ENCODE measurements at regions of chr5 and their contacts with region 1.

Region 1: GRCh38 chr5:172833686-172834414 is at the start of gene ERGIC1:
- DNase-seq: peak; percentile 87
- H3K4me3 ChIP-seq: peak within 1 kb of the TSS; percentile 88
- H3K27ac ChIP-seq: peak within 1 kb of the TSS; percentile 94
- H3K4me1 ChIP-seq: peaks cover 44% of the 10 kb centered on the region
- CTCF ChIP-seq: no peak
- total RNA-seq, gene ERGIC1: 101 and 125 TPM in 2 replicates

Region 2: GRCh38 chr5:172106511-172107356 is 727.1 kb before region 1 on chr5:
- CTCF ChIA-PET with region 1: no interaction called
- POLR2A ChIA-PET with region 1: no interaction called
- intact Hi-C with region 1: loop called (anchors 10 kb)
- DNase-seq: peak; percentile 57
- H3K4me3 ChIP-seq: peak overlapping the region; percentile 35
- H3K27ac ChIP-seq: no peak overlapping the region
- H3K4me1 ChIP-seq: peaks cover 31% of the 10 kb centered on the region
- CTCF ChIP-seq: peak; percentile 96

Region 3: GRCh38 chr5:172770675-172771438 is 63.0 kb before region 1 on chr5 and contains the start of gene DUSP1:
- CTCF ChIA-PET with region 1: no interaction called
- POLR2A ChIA-PET with region 1: interaction called, 6 read pairs
- intact Hi-C with region 1: loop called (anchors 1 kb)
- DNase-seq: peak; percentile 93
- H3K4me3 ChIP-seq: peak within 1 kb of the TSS; percentile 82
- H3K27ac ChIP-seq: peak within 1 kb of the TSS; percentile 44
- H3K4me1 ChIP-seq: peaks cover 29% of the 10 kb centered on the region
- CTCF ChIP-seq: peak; percentile 59
- total RNA-seq, gene DUSP1: 5.3 and 7.0 TPM in 2 replicates

Region 4: DNA sequence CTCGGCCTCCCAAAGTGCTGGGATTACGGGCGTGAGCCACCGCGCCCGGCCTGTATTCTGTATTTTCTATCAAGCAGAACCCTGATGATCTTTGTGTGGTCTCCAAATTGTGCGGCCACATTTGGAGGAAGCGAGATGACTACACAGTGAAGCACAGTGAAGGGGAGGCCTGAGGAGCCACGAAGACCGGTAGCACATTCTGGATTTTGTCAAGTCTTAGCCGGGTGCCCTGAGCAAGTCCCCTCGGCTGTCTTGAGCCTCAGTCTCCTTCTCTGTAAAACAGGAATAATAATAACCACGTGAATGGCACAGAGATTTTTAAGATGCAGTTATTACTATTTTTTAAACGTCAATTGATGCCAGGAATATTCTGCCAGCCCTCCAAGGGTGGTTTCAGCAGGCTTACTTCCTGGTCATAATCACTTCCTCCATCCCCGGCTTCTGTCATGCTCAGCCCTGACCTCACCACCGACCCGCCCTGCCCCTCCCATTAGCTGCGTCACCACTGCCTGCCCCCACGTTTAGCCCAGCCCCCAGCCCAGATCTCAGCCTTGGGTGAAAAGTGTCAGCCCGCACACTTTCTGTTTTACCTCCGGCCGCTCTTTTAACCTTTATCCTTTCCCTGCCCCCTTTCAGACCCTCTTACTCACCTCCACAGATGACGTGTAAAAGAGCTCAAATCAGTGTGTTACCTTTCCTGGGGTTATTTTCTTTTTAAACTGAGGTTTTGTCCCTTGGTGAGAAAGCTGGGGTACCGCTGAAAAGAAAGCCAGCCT is 26.8 kb before region 1 on chr5:
- CTCF ChIA-PET with region 1: no interaction called
- POLR2A ChIA-PET with region 1: no interaction called
- intact Hi-C with region 1: no loop called
- DNase-seq: peak; percentile 68
- H3K4me3 ChIP-seq: peak overlapping the region; percentile 11
- H3K27ac ChIP-seq: no peak overlapping the region
- H3K4me1 ChIP-seq: peaks cover 10% of the 10 kb centered on the region
- CTCF ChIP-seq: no peak

Region 5: GRCh38 chr5:172849606-172850453 is 16.0 kb after region 1 on chr5:
- CTCF ChIA-PET with region 1: no interaction called
- POLR2A ChIA-PET with region 1: interaction called, 11 read pairs
- intact Hi-C with region 1: loop called (anchors 1 kb)
- DNase-seq: peak; percentile 46
- H3K4me3 ChIP-seq: no peak overlapping the region
- H3K27ac ChIP-seq: peak overlapping the region; percentile 38
- H3K4me1 ChIP-seq: peaks cover 34% of the 10 kb centered on the region
- CTCF ChIP-seq: no peak

Region 6: GRCh38 chr5:172910828-172911627 is 77.2 kb after region 1 on chr5:
- CTCF ChIA-PET with region 1: no interaction called
- POLR2A ChIA-PET with region 1: interaction called, 3 read pairs
- intact Hi-C with region 1: loop called (anchors 2 kb)
- DNase-seq: peak; percentile 35
- H3K4me3 ChIP-seq: no peak overlapping the region
- H3K27ac ChIP-seq: no peak overlapping the region
- H3K4me1 ChIP-seq: peaks cover 9% of the 10 kb centered on the region
- CTCF ChIP-seq: peak; percentile 42

Region 7: GRCh38 chr5:172932313-172933017 is 98.6 kb after region 1 on chr5:
- CTCF ChIA-PET with region 1: no interaction called
- POLR2A ChIA-PET with region 1: no interaction called
- intact Hi-C with region 1: loop called (anchors 2 kb)
- DNase-seq: peak; percentile 64
- H3K4me3 ChIP-seq: no peak overlapping the region
- H3K27ac ChIP-seq: no peak overlapping the region
- H3K4me1 ChIP-seq: no peaks in the 10 kb centered on the region
- CTCF ChIP-seq: peak; percentile 91

Region 8: DNA sequence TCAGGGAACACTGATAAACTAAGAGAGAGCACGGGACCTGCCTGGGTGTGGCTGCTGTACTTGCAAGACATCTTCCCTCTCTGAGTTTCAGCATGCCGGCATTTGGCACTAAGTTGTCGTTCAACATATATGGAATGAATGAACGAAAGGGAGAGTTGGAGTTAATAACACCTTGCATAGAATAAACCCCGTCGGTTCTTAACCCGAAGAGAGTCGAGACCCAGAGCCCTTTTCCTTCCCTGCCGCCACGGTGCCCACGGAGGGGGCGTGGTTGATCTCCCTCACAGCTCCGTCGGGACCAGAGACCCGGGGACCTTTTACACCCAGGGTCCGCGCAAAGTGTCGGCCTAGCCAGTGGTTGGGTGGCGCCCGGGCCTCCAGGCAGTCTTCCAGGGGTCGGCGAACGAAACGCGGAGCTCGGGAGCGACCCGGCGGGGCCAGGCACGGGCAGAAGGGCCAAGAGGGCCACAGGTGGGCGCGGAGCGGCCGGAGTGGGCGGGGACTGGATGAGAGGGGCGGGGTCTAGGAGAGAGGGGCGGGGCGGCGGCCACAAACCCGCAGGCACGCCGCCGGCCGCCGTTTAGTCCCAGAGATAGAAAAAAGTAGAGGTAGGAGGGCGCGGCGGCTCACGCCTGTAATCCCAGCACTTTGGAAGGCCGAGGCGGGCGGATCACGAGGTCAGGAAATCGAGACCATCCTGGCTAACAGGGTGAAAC is 124.6 kb after region 1 on chr5:
- CTCF ChIA-PET with region 1: no interaction called
- POLR2A ChIA-PET with region 1: no interaction called
- intact Hi-C with region 1: no loop called
- DNase-seq: peak; percentile 67
- H3K4me3 ChIP-seq: peak overlapping the region; percentile 88
- H3K27ac ChIP-seq: peak overlapping the region; percentile 19
- H3K4me1 ChIP-seq: peaks cover 13% of the 10 kb centered on the region
- CTCF ChIP-seq: no peak

Region 9: DNA sequence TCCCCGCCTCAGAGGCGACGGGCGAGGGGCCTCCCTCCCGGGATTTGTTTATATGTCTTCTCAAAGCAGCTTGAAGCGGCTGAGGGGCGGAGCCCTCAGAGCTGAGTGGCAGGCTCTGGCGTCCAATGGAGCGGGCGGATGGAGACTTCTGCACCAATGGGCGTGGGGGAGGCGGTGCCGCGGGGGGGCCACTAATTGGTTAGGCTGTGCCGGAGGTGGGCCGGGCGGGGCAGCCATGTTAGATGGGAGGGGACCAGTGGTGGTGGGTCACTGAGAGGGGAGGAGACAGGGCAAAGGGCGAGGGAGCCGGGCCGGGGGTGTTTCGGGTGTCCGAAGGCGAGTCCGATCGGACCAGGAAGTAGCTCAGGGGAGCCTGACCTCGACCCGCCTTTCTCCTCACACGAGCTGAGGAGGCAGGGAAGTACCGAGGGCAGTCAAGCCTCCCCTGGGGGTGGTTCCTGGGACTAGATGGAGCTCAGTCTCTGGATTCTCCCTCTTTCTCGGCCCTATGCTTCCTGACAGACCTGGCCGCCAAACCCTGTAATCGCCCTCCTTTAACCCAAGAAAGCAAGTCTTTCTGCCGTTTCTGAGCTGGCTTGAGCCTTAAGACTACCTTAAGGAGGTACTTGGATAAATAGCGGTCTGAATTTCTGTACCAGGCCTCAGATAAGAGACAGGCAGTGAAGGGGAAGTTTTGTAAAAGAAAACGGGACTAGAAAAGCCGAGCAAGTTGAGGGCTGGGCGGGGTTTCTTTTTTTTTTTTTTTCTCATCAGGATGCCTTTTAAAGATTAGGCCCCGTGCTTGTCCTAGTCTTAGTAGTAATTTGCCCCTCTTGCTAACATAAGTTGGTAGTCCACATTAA is 223.4 kb after region 1 on chr5:
- CTCF ChIA-PET with region 1: no interaction called
- POLR2A ChIA-PET with region 1: no interaction called
- intact Hi-C with region 1: loop called (anchors 1 kb)
- DNase-seq: peak; percentile 98
- H3K4me3 ChIP-seq: peak overlapping the region; percentile 89
- H3K27ac ChIP-seq: peak overlapping the region; percentile 83
- H3K4me1 ChIP-seq: peaks cover 40% of the 10 kb centered on the region
- CTCF ChIP-seq: no peak

Measured in OCI-LY7 (cell line).